RWPE1 (cell line): ENCODE measurements at regions of chrX and their contacts with region 1.

Region 1: DNA sequence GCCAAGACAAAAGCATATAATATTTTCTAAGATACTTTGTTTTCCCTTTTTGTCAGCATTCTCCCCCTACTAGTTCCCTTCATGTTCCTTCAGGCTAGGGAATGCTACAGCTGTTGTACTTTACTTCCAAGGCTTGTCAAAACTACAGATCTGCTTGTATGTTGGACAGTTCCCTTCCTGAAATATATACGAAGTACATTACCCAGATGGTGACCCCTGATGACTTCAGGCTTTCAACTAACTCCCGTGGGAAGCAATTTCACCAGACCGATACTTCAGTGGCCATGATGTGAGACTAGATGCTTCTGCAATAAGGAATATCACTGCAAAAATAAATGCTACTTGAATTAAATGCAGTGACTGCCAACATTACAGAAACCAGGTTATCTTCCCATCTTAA is 332.8 kb downstream of the SH2D1A start:
- DNase-seq: no peak
- H3K27ac ChIP-seq: no peak overlapping the region
- CTCF ChIP-seq: no peak

Region 2: DNA sequence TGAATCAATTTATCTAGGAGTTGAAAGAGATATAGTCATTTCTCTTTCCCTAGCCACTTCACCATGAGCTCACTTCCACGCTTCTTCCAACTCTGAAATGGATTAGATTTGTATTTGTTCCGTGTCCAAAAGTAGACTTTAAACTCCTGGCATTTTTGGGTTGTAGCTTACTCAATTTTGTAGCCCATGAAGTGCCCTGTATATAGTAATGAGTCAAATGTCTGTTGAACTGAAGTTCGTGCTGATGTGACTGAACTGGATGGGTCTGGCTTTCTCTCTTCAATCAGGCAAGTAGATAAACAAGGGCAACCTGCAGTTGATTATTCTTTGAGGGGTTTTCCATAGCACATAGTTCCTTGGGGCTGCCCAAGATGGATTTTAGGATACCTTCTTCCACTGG is 117.8 kb after region 1 on chrX:
- CTCF ChIA-PET with region 1: no interaction called
- POLR2A ChIA-PET with region 1: no interaction called
- DNase-seq: no peak
- H3K27ac ChIP-seq: no peak overlapping the region
- CTCF ChIP-seq: no peak

Region 3: GRCh38 chrX:126170720-126171119 is 1491.5 kb after region 1 on chrX:
- CTCF ChIA-PET with region 1: interaction called, 10 read pairs
- POLR2A ChIA-PET with region 1: no interaction called
- DNase-seq: no peak
- H3K27ac ChIP-seq: no peak overlapping the region
- CTCF ChIP-seq: no peak